KBM-7 (cell line): ENCODE measurements at regions of chr4 and their contacts with region 1.

Region 1: GRCh38 chr4:25439918-25440477 is 62.9 kb downstream of the ANAPC4 start:
- DNase-seq: peak; percentile 74

Region 2: DNA sequence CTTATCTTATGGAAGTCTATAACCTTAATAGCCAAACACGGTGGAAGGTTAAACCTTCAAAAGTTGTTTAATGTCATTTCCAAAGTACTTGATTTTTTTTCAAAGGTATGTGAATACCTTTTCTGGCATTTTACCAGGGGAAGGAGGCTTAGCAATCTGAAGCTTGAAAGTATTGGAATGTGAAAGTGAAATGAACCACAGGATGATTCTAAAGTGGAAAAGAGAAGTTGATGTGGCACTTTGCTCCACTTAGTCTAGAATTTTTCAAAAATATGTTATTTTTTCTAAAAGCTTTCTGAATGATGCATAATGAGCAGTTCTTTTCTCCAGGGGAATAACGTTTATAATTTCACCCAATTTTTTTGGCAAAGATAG is 186.9 kb before region 1 on chr4:
- in situ Hi-C with region 1: no loop called
- DNase-seq: no peak

Region 3: DNA sequence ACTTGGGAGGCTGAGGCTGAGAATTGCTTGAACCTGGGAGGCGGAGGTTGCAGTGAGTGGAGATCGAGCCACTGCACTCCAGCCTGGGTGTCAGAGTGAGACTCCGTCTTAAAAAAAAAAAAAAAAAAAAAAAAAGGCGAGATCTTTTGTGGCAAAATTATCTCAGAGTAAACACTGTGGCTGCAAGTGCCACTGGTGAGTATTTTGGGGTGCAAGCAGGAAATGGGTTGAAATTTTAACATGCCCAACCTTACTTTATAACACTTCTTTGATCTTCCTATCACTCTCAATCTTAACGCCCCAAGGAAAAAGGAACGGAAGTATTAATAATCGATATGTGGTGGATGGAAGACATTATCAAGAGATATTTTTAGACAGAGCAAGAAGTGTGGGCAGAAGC is 247.8 kb after region 1 on chr4:
- in situ Hi-C with region 1: no loop called
- DNase-seq: no peak

Region 4: DNA sequence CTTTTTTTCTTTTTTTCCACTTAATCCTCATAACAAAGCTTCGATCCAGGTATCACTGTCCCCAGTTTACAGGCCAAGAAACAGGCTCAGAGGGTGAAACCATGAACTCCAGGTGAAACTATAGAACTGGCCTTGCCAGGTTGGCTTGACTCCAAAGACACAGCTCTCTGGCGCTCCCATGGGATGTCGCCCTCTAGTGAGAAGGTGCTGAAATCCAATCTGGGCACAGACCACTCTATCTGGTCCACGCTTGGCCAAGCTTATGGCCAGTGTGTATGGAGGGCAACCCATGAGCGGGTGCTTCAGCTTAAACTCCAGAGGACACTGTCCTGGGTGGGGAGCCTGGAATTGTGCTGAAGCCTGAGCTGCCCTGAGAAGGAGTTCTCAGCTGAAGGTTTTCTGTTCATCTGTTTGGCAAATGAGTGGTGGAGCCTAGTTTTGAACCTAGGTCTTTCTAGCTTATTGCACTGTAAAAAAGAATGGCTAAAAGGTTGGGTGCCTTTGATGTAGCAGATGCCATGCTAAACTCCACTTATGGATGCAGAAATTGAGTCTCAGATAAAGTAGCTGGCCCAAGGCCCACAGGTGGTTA is 352.3 kb after region 1 on chr4:
- in situ Hi-C with region 1: loop called (anchors 25 kb)
- DNase-seq: no peak